HepG2 (cell line): ENCODE measurements at regions of chr12 and their contacts with region 1.

Region 1: GRCh38 chr12:74415633-74416032 is 122.0 kb upstream of the ATXN7L3B start:
- DNase-seq: peak; percentile 48
- ATAC-seq: peak; percentile 74
- H3K4me3 ChIP-seq: no peak overlapping the region
- H3K27ac ChIP-seq: no peak overlapping the region
- H3K4me1 ChIP-seq: no peaks in the 10 kb centered on the region
- H3K27me3 ChIP-seq: no peaks in the 10 kb centered on the region
- CTCF ChIP-seq: peak; percentile 45
- EP300 ChIP-seq: no peak
- POLR2A ChIP-seq: no peak
- RAD21 ChIP-seq: no peak

Region 2: DNA sequence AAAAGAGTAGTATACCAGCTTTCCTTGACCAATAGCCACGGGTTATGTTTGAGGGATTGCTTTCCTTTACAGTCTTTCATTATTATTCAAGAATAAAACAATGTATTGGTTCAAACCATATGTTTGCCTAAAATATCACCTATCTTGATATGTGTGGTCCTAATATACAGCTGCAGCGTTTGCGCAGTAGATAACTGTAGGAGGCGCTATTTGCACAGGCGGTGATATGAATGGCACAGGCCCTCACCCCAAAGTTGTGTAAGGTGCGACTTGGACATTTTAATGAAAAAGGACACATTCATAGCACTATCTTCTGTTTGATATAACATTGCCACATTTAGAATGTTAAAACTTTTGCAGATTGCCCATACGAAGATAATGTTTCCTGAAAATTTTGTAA is 1845.0 kb before region 1 on chr12:
- CTCF ChIA-PET with region 1: no interaction called
- POLR2A ChIA-PET with region 1: no interaction called
- in situ Hi-C with region 1: no loop called
- intact Hi-C with region 1: loop called (anchors 10 kb)
- DNase-seq: peak; percentile 30
- ATAC-seq: peak; percentile 75
- H3K4me3 ChIP-seq: no peak overlapping the region
- H3K27ac ChIP-seq: no peak overlapping the region
- H3K4me1 ChIP-seq: no peaks in the 10 kb centered on the region
- H3K27me3 ChIP-seq: no peaks in the 10 kb centered on the region
- CTCF ChIP-seq: peak; percentile 57
- EP300 ChIP-seq: no peak
- POLR2A ChIP-seq: no peak
- RAD21 ChIP-seq: no peak

Region 3: DNA sequence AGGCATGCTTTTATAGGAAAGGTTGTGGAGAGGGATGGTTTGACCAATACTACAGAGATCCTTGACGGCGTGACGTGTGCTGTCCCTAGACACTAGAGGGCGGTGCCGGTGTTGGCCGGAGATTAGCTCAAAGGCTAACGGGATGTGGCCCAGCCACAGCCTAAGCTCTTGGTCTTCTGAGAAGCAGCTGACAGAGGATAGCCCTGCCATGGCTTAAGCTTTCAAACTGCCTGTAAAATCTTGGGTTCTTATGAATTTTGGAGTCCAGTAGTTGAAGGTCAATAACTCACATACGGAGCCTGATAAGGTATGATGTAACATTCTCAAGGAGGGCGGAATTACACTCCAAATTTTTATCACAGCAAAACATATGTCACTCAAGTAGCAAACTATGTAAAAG is 393.7 kb before region 1 on chr12:
- CTCF ChIA-PET with region 1: no interaction called
- POLR2A ChIA-PET with region 1: no interaction called
- in situ Hi-C with region 1: no loop called
- intact Hi-C with region 1: loop called (anchors 1 kb)
- DNase-seq: peak; percentile 50
- ATAC-seq: peak; percentile 100
- H3K4me3 ChIP-seq: no peak overlapping the region
- H3K27ac ChIP-seq: no peak overlapping the region
- H3K4me1 ChIP-seq: no peaks in the 10 kb centered on the region
- H3K27me3 ChIP-seq: no peaks in the 10 kb centered on the region
- CTCF ChIP-seq: peak; percentile 84
- EP300 ChIP-seq: no peak
- POLR2A ChIP-seq: no peak
- RAD21 ChIP-seq: 0 out of 2 replicates have a peak, but pooled peaks have one; percentile 11

Region 4: GRCh38 chr12:74235342-74235741 is 180.3 kb before region 1 on chr12:
- CTCF ChIA-PET with region 1: no interaction called
- POLR2A ChIA-PET with region 1: no interaction called
- in situ Hi-C with region 1: no loop called
- intact Hi-C with region 1: loop called (anchors 5 kb)
- DNase-seq: no peak
- ATAC-seq: no peak
- H3K4me3 ChIP-seq: no peak overlapping the region
- H3K27ac ChIP-seq: no peak overlapping the region
- H3K4me1 ChIP-seq: no peaks in the 10 kb centered on the region
- H3K27me3 ChIP-seq: no peaks in the 10 kb centered on the region
- CTCF ChIP-seq: no peak
- EP300 ChIP-seq: no peak
- POLR2A ChIP-seq: no peak
- RAD21 ChIP-seq: no peak

Region 5: GRCh38 chr12:74476234-74476633 is 60.6 kb after region 1 on chr12:
- CTCF ChIA-PET with region 1: no interaction called
- POLR2A ChIA-PET with region 1: no interaction called
- in situ Hi-C with region 1: no loop called
- intact Hi-C with region 1: no loop called
- DNase-seq: no peak
- ATAC-seq: no peak
- H3K4me3 ChIP-seq: no peak overlapping the region
- H3K27ac ChIP-seq: no peak overlapping the region
- H3K4me1 ChIP-seq: no peaks in the 10 kb centered on the region
- H3K27me3 ChIP-seq: no peaks in the 10 kb centered on the region
- CTCF ChIP-seq: no peak
- EP300 ChIP-seq: no peak
- POLR2A ChIP-seq: no peak
- RAD21 ChIP-seq: no peak

Region 6: DNA sequence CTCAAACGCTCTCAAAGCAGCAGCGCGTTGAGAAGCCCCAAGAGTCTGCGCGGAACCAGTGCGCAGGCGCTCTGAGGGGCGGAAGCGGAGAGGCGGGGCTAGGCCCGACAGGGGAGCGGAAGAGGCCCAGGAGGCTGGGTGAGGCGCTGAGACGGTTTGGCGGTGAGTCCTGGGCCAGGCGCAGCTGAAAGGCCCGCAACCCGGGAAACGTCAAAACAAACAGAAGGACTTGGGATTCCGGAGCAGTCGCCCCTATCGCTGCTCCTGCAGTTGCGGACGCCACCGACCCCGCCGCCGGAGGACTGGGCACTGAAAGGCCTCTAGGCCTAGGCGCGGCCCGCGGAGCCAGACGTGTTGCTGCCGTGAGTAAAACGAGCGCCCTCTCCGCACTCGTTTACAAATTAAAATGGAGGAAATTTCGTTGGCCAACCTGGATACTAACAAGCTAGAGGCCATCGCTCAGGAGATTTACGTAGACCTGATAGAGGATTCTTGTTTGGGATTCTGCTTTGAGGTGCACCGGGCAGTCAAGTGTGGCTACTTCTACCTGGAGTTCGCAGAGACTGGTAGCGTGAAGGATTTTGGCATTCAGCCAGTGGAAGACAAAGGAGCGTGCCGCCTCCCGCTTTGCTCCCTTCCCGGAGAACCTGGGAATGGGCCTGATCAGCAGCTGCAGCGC is 122.2 kb after region 1 on chr12 and contains the start of gene ATXN7L3B:
- CTCF ChIA-PET with region 1: interaction called, 4 read pairs
- POLR2A ChIA-PET with region 1: no interaction called
- in situ Hi-C with region 1: no loop called
- intact Hi-C with region 1: loop called (anchors 2 kb)
- DNase-seq: peak; percentile 89
- ATAC-seq: peak; percentile 98
- H3K4me3 ChIP-seq: peak within 1 kb of the TSS; percentile 80 to 86 (median 85)
- H3K27ac ChIP-seq: peak within 1 kb of the TSS; percentile 96
- H3K4me1 ChIP-seq: peaks cover 32% of the 10 kb centered on the region
- H3K27me3 ChIP-seq: no peaks in the 10 kb centered on the region
- CTCF ChIP-seq: 0 out of 2 replicates have a peak, but pooled peaks have one; percentile 11
- EP300 ChIP-seq: no peak
- POLR2A ChIP-seq: peak; percentile 78 to 79
- RAD21 ChIP-seq: peak; percentile 44; the same call in 1 of the 2 replicates
- total RNA-seq, gene ATXN7L3B: 23.8 and 34.9 TPM in 2 replicates